Mammary epithelial cell (primary cell): ENCODE measurements at regions of chr7 and their contacts with region 1.

Region 1: GRCh38 chr7:138799336-138800005 is 1.5 kb upstream of the ATP6V0A4 start:
- DNase-seq: no peak
- H3K4me3 ChIP-seq: no peak overlapping the region
- H3K27ac ChIP-seq: no peak overlapping the region
- H3K4me1 ChIP-seq: no peaks in the 10 kb centered on the region
- H3K27me3 ChIP-seq: no peaks in the 10 kb centered on the region
- CTCF ChIP-seq: no peak

Region 2: GRCh38 chr7:137626469-137627067 is 1172.9 kb before region 1 on chr7:
- CTCF ChIA-PET with region 1: no interaction called
- dilution Hi-C with region 1: no loop called
- in situ Hi-C with region 1: no loop called
- intact Hi-C with region 1: no loop called
- DNase-seq: peak; percentile 41
- H3K4me3 ChIP-seq: no peak overlapping the region
- H3K27ac ChIP-seq: no peak overlapping the region
- H3K4me1 ChIP-seq: no peaks in the 10 kb centered on the region
- H3K27me3 ChIP-seq: no peaks in the 10 kb centered on the region
- CTCF ChIP-seq: peak; percentile 85 to 91

Region 3: GRCh38 chr7:138542183-138542582 is 257.3 kb before region 1 on chr7:
- CTCF ChIA-PET with region 1: no interaction called
- dilution Hi-C with region 1: no loop called
- in situ Hi-C with region 1: no loop called
- intact Hi-C with region 1: no loop called
- DNase-seq: no peak
- H3K4me3 ChIP-seq: no peak overlapping the region
- H3K27ac ChIP-seq: no peak overlapping the region
- H3K4me1 ChIP-seq: no peaks in the 10 kb centered on the region
- H3K27me3 ChIP-seq: no peaks in the 10 kb centered on the region
- CTCF ChIP-seq: no peak

Region 4: DNA sequence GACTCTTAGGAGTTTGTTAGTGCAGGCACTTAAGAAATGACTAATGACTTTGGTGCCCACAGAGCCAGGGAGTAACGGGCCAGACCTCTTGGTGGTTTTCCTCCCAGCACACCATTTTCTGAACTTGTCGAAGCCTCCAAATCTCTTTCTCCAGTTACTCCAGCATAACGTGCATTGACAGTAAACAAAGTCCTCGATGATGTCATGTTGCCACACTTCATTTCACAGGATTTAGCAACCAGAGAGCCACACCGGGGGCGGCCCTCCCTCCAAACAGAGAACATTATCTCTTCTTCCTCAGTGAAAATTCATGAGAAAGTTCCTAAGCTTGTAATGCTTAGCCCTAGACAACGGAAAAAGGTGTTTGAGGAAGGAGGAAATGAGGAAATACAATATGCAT is 94.3 kb before region 1 on chr7:
- CTCF ChIA-PET with region 1: no interaction called
- dilution Hi-C with region 1: loop called (anchors 5 kb)
- in situ Hi-C with region 1: no loop called
- intact Hi-C with region 1: no loop called
- DNase-seq: no peak
- H3K4me3 ChIP-seq: no peak overlapping the region
- H3K27ac ChIP-seq: no peak overlapping the region
- H3K4me1 ChIP-seq: peaks cover 5% of the 10 kb centered on the region
- H3K27me3 ChIP-seq: no peaks in the 10 kb centered on the region
- CTCF ChIP-seq: no peak

Region 5: GRCh38 chr7:138752568-138753518 is 46.6 kb before region 1 on chr7:
- CTCF ChIA-PET with region 1: no interaction called
- dilution Hi-C with region 1: no loop called
- in situ Hi-C with region 1: no loop called
- intact Hi-C with region 1: no loop called
- DNase-seq: peak; percentile 95
- H3K4me3 ChIP-seq: no peak overlapping the region
- H3K27ac ChIP-seq: no peak overlapping the region
- H3K4me1 ChIP-seq: peaks cover 14% of the 10 kb centered on the region
- H3K27me3 ChIP-seq: no peaks in the 10 kb centered on the region
- CTCF ChIP-seq: no peak

Region 6: DNA sequence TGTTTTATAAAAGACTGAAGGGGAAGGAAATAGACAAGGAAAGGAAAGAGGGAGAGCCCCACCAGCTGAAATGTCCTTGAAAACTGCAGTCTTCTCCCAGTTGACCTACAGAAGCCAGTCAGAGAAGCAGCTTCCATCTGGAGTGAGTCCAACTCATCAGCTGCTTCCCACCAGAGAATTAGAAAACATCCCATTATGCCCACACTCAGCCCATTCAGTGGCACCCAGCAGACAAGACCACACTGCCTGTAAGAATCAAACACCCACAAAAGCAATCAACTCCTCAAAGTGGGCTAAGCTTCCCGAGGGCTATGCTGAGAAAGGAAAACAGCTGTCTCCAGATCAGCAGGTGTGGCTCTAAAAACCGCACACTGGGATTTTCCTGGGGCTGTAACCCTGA is 31.2 kb before region 1 on chr7:
- CTCF ChIA-PET with region 1: no interaction called
- dilution Hi-C with region 1: loop called (anchors 5 kb)
- in situ Hi-C with region 1: no loop called
- intact Hi-C with region 1: no loop called
- DNase-seq: no peak
- H3K4me3 ChIP-seq: no peak overlapping the region
- H3K27ac ChIP-seq: no peak overlapping the region
- H3K4me1 ChIP-seq: no peaks in the 10 kb centered on the region
- H3K27me3 ChIP-seq: no peaks in the 10 kb centered on the region
- CTCF ChIP-seq: no peak

Region 7: DNA sequence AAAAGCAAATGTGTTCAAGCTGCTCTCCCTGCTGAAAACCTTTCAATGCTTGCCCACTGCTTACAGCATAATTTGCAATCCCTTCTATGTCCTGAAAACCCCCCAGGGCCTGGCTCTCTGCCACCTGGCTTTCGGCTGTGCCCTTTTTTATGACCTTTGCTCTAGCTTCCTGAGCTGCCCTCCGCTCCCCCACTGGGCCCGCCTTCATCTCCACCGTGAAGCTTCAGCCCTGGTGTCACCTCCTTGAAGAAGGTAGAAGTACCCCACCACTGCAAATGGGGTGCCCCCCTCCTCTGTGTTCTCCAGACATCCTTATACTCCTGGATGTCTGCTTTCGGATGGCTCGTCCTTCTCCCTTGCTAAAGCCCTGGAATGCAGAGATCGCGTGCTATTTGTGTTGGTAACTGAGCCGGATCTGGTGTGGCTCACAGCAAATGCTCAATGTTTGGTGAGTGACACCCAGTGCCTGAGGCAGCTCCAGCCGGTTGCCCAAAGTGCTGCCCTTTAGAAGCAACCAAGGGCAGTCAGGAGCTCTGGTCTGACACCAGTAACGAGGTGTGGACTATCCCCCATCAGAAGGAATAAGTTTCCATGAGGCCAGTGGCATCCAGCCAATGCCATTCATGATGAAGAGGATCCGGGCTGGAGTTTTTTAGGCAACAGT is 91.4 kb after region 1 on chr7:
- CTCF ChIA-PET with region 1: no interaction called
- dilution Hi-C with region 1: no loop called
- in situ Hi-C with region 1: no loop called
- intact Hi-C with region 1: no loop called
- DNase-seq: no peak
- H3K4me3 ChIP-seq: no peak overlapping the region
- H3K27ac ChIP-seq: no peak overlapping the region
- H3K4me1 ChIP-seq: no peaks in the 10 kb centered on the region
- H3K27me3 ChIP-seq: no peaks in the 10 kb centered on the region
- CTCF ChIP-seq: no peak